Tibial artery (tissue), 4 donors: ENCODE measurements at regions of chr7 and their contacts with region 1.

Region 1: GRCh38 chr7:73978661-73979563 is 49.1 kb upstream of the ELN start:
- DNase-seq: peak; percentile 23 to 80
- H3K4me3 ChIP-seq: no peak overlapping the region
- H3K27ac ChIP-seq: peak overlapping the region; percentile 47 to 63
- H3K4me1 ChIP-seq: peaks cover 4 to 49% (median 34%) of the 10 kb centered on the region in 4 donors
- H3K27me3 ChIP-seq: no peaks in the 10 kb centered on the region
- CTCF ChIP-seq: no peak

Region 2: GRCh38 chr7:73683056-73683964 is 295.6 kb before region 1 on chr7 and contains the starts of genes BUD23 and DNAJC30:
- intact Hi-C with region 1: no loop called
- DNase-seq: peak; percentile 98 to 99
- H3K4me3 ChIP-seq: peak within 1 kb of the TSS; percentile 87 to 98
- H3K27ac ChIP-seq: peak within 1 kb of the TSS; percentile 81 to 93
- H3K4me1 ChIP-seq: peaks cover 0 to 37% (median 28%) of the 10 kb centered on the region in 4 donors
- H3K27me3 ChIP-seq: no peaks in the 10 kb centered on the region
- CTCF ChIP-seq: peak in 1 of 2 experiments; percentile 36

Region 3: DNA sequence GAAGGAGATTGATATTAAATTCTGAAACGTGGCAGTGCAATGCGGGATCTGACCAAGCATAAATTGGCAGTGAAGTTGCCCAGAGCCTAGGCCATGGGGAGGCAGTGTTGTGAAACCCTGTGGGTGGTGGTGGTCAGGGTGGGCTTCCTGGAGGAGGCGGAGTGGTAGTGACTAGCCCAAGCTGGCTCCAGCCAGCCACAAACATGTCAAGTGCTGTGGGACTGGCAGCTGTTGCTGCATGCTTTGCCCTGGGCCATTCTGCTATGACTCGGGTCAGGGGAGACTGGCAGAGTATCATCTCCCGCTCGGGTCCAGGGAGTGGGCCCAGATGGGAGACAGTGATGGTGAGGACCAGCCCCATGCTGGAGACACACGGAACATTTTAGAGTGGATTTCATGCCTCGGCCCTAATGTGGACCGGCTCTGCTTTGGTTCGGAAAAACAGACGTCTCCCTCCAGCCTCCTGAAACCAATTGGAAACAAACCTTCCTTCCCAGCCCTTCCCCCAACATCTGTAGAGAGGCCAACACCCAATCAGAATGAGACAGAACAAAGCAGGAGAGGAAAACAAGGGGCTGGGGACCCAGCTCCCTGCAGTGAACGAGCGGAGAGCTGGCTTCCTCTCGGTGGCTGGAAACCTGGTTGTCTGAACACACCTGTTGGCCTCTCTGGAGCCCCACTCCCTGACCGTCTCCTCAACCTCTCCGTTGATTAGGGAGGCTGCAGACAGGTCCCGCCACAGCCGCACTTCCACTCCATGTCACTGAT is 59.8 kb before region 1 on chr7:
- intact Hi-C with region 1: loop called (anchors 10 kb)
- DNase-seq: no peak
- H3K4me3 ChIP-seq: no peak overlapping the region
- H3K27ac ChIP-seq: no peak overlapping the region
- H3K4me1 ChIP-seq: peaks cover 0 to 16% (median 5%) of the 10 kb centered on the region in 4 donors
- H3K27me3 ChIP-seq: no peaks in the 10 kb centered on the region
- CTCF ChIP-seq: no peak